GM10248 (cell line): ENCODE measurements at regions of chr6 and their contacts with region 1.

Region 1: DNA sequence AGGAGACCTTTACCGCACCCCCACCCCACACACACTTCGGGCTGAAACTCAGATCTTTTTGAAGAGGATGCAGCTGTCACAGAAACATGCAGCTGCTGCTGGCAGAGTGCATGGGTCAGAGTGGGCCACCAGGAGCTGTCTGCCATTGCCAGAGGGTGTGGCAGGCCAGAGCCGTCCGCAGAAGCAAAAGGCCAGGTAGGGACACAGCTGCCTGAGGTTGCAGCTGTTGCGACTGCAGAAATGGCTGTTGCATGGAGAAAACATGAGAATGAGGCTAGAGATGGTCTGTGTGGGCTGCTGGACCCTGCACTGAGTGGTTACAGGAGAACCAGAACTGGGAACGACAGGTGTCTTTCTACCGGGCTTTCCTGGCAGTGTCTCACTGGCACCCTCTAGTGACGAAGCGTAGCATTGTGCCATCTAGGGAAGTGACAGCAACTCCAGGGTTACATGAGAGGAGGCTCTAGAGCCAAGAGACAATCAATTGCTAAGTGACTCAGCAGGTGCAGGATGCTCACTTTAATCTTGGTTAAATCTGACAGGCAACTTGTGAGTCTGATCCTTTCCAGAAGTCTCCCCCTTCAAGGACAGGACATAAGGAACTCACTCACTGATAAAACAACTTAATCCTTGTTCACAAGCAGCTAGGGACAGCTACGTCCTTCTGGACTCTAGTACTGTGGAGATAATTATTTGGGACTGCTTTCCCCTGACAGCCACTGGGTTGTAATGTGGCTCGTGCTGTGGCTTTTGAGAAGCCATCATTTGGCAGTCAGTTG is 29.1 kb upstream of the SERPINB9 start:
- DNase-seq: peak; percentile 86
- CTCF ChIP-seq: peak; percentile 96

Region 2: GRCh38 chr6:2791124-2791974 is 140.8 kb before region 1 on chr6:
- CTCF ChIA-PET with region 1: interaction called, 70 read pairs
- POLR2A ChIA-PET with region 1: interaction called, 6 read pairs
- DNase-seq: peak; percentile 73
- CTCF ChIP-seq: peak; percentile 65

Region 3: DNA sequence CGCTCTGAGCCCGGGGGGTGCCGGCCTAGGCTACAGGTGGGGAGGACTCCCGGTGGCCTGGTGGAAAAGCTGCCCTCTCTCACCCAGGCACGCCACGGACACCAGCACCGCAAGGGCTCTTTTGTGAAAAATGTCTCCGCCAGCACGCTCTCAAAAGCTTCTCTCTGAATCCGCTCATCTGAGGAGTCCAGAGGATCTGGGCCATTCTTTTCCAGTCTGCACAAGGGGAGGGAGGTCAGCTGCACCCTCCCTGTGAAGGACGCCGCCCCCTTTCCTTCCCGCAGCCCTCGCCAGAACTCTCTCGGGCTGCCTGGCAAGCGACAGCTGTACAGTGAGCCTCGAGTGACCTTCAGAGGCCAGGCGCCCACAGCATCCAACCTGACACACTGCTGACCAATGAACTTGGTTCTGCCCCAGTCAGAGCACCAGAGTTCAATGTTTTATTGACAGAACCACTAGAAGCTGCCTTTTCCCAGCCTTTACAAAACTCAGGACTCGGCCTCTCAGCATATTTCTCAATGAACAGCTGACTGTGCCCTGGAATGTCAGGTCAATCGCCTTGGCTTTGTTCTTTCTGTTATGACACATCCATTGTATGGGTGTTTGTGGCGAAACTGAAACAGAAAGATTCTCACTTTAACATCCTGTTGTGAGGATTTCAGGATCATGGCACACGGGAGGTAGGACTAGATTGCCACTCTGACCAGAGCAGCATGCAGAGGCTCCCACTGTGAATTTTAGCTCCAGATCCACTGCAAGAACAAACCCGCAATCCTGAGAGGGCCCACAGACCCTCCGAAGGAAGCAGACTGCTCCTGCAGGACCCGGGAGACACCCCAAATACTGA is 55.7 kb before region 1 on chr6:
- CTCF ChIA-PET with region 1: interaction called, 12 read pairs
- POLR2A ChIA-PET with region 1: no interaction called
- DNase-seq: no peak
- CTCF ChIP-seq: no peak

Region 4: GRCh38 chr6:2921520-2922115 is 10.5 kb before region 1 on chr6:
- CTCF ChIA-PET with region 1: interaction called, 25 read pairs
- POLR2A ChIA-PET with region 1: no interaction called
- DNase-seq: no peak
- CTCF ChIP-seq: no peak

Region 5: GRCh38 chr6:2988426-2989331 is 56.5 kb after region 1 on chr6:
- CTCF ChIA-PET with region 1: interaction called, 17 read pairs
- POLR2A ChIA-PET with region 1: no interaction called
- DNase-seq: peak; percentile 75
- CTCF ChIP-seq: peak; percentile 74

Region 6: GRCh38 chr6:3251462-3252314 is 319.5 kb after region 1 on chr6:
- CTCF ChIA-PET with region 1: no interaction called
- POLR2A ChIA-PET with region 1: no interaction called
- DNase-seq: peak; percentile 87
- CTCF ChIP-seq: peak; percentile 93